Spleen (tissue), 13 donors: ENCODE measurements at regions of chr19 and their contacts with region 1.

Region 1: DNA sequence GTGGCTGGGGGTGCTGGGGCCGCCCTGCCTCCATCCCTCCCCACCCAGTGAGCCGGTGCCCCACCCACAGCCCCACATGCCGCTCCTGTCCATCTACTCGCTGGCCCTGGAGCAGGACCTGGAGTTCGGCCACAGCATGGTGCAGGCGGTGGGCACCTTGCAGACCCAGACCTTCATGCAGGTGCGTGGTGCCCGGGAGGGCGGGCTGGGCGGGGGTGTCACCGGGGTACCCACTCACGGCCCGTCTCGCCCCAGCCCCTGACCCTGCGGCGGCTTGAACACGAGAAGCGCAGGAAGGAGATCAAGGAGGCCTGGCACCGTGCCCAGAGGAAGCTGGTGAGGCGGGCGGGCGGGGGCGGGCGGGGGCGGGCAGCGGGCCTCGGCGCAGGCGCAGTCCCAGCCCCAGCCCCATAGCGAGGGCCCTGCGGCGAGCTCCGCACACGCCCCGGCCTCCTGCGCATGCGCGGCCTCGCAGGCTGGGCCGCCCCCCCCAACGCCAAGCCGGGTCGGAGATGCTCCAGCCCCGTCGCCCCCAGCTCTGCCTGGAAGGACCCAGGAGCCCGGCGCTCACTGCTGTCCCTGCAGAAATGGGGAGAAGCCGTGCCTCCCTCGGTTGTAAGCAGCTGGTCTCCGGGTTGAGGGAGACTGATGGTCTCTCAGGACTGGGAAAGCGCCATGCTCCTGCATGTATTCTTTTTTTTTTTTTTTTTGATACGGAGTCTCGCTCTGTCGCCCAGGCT is 7.7 kb downstream of the ARHGAP45 start:
- DNase-seq: peak; percentile 99
- H3K4me3 ChIP-seq: peak overlapping the region; percentile 10 to 66 (median 37)
- H3K27ac ChIP-seq: peak overlapping the region; percentile 58 to 97 (median 81)
- H3K4me1 ChIP-seq: peaks cover 55 to 100% (median 92%) of the 10 kb centered on the region in 6 donors
- H3K27me3 ChIP-seq: peaks cover 0 to 15% (median 0%) of the 10 kb centered on the region in 7 donors
- CTCF ChIP-seq: no peak
- POLR2A ChIP-seq: no peak

Region 2: GRCh38 chr19:1020868-1021425 is 53.8 kb before region 1 on chr19 and contains the start of gene TMEM259:
- intact Hi-C with region 1: loop called (anchors 10 kb)
- DNase-seq: peak; percentile 100
- H3K4me3 ChIP-seq: peak within 1 kb of the TSS; percentile 61 to 91 (median 82)
- H3K27ac ChIP-seq: peak within 1 kb of the TSS; percentile 80 to 98 (median 96)
- H3K4me1 ChIP-seq: peaks cover 46 to 87% (median 67%) of the 10 kb centered on the region in 6 donors
- H3K27me3 ChIP-seq: peaks cover 0 to 1% (median 0%) of the 10 kb centered on the region in 7 donors
- CTCF ChIP-seq: peak in 2 of 11 experiments; percentile 21 to 47
- POLR2A ChIP-seq: peak in 2 of 3 donors; percentile 39 to 42
- total RNA-seq, gene TMEM259: 187 to 275 (median 240) TPM

Region 3: GRCh38 chr19:1241417-1242095 is 166.8 kb after region 1 on chr19 and contains the start of gene ATP5F1D:
- intact Hi-C with region 1: no loop called
- DNase-seq: peak; percentile 98
- H3K4me3 ChIP-seq: peak within 1 kb of the TSS; percentile 62 to 97 (median 78)
- H3K27ac ChIP-seq: peak within 1 kb of the TSS; percentile 85 to 100 (median 92)
- H3K4me1 ChIP-seq: peaks cover 52 to 94% (median 87%) of the 10 kb centered on the region in 6 donors
- H3K27me3 ChIP-seq: peaks cover 0 to 37% (median 14%) of the 10 kb centered on the region in 7 donors
- CTCF ChIP-seq: peak in 2 of 11 experiments; percentile 13 to 27
- POLR2A ChIP-seq: peak in 1 of 3 donors; percentile 25
- total RNA-seq, gene ATP5F1D: 49.1 to 131 (median 102) TPM